PC-9 (cell line): ENCODE measurements at regions of chr16 and their contacts with region 1.

Region 1: GRCh38 chr16:26905336-26905735 is 161.4 kb upstream of the C16orf82 start:
- DNase-seq: no peak
- H3K4me3 ChIP-seq: no peak overlapping the region
- H3K27ac ChIP-seq: no peak overlapping the region
- H3K4me1 ChIP-seq: no peaks in the 10 kb centered on the region
- H3K27me3 ChIP-seq: peaks cover 41% of the 10 kb centered on the region
- CTCF ChIP-seq: no peak

Region 2: GRCh38 chr16:26680671-26681070 is 224.7 kb before region 1 on chr16:
- CTCF ChIA-PET with region 1: no interaction called
- POLR2A ChIA-PET with region 1: no interaction called
- intact Hi-C with region 1: no loop called
- DNase-seq: no peak
- H3K4me3 ChIP-seq: no peak overlapping the region
- H3K27ac ChIP-seq: no peak overlapping the region
- H3K4me1 ChIP-seq: no peaks in the 10 kb centered on the region
- H3K27me3 ChIP-seq: peaks cover 11% of the 10 kb centered on the region; the same call in 1 of the 2 replicates
- CTCF ChIP-seq: no peak

Region 3: DNA sequence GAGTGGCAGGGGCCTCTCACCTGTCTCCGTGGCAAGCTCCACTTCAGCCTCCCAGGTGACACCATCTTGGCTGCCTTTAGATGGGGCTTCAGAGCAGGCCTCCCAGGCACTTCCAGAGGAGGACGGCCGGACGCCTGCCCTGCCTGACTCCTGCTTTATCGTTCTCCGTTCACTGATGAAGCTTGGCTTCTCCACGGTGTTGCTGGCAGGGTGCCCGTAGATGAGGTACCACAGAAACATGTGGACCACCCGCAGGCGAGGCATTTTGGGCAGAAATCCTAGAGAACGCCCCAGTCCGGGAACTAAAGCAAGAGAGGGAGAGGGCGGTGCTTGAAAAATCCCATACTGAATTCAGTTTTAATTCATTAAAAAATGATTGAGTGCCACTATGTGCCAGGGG is 589.9 kb after region 1 on chr16:
- CTCF ChIA-PET with region 1: no interaction called
- POLR2A ChIA-PET with region 1: interaction called, 11 read pairs
- intact Hi-C with region 1: no loop called
- DNase-seq: no peak
- H3K4me3 ChIP-seq: no peak overlapping the region
- H3K27ac ChIP-seq: no peak overlapping the region
- H3K4me1 ChIP-seq: no peaks in the 10 kb centered on the region
- H3K27me3 ChIP-seq: no peaks in the 10 kb centered on the region
- CTCF ChIP-seq: no peak